IMR-90 (cell line): ENCODE measurements at regions of chr14 and their contacts with region 1.

Region 1: DNA sequence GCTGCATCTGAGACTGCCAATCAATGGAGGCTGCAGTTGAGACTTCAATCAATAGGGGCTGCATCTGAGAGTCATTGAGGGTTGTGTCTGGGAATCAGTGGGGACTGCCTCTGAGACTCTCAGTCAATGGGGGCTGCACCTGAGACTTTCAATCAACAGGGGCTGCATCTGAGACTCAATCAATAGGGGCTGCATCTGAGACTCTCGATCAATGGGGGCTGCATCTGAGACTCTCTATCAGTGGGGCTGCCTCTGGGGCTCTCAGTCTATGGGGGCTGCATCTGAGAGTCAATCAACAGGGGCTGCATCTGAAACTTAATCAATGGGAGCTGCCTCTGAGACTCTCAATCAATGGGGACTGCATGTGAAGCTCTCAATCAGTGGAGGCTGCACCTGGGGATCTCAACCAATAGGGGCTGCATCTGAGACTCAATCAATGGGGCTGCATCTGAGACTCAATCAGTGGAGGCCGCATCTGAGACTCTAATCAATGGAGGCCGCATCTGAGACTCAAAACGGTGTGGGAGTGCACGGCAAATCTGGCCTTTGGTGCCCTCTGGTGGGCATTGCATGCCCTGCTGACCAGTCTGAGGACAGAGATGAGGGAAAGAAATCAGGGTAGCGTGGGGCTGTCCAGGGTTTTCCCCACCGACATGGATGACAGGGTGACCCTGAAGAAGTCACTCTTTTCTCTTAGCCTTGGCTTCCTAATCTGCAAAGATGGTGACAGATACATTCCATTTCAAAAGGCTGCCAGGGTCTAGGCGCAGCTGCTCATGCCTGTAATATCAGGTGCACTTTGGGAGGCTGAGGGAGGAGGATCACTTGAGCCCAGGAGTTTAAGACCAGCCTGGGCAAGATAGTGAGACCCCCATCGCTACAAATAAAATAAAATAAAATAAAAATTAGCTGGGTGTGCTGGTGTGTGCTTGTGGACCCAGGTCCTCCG is 41.3 kb upstream of the EIF5 start:
- DNase-seq: peak; percentile 53
- ATAC-seq: peak; percentile 93
- H3K4me3 ChIP-seq: no peak overlapping the region
- H3K27ac ChIP-seq: no peak overlapping the region
- H3K4me1 ChIP-seq: no peaks in the 10 kb centered on the region
- H3K27me3 ChIP-seq: peaks cover 40% of the 10 kb centered on the region
- CTCF ChIP-seq: peak; percentile 97
- POLR2A ChIP-seq: no peak
- RAD21 ChIP-seq: peak; percentile 97

Region 2: GRCh38 chr14:103078093-103078749 is 214.5 kb before region 1 on chr14:
- CTCF ChIA-PET with region 1: no interaction called
- POLR2A ChIA-PET with region 1: interaction called, 4 read pairs
- dilution Hi-C with region 1: no loop called
- in situ Hi-C with region 1: loop called (anchors 5 kb)
- intact Hi-C with region 1: loop called (anchors 1 kb)
- DNase-seq: peak; percentile 76
- ATAC-seq: peak; percentile 38; the same call in 1 of the 2 replicates
- H3K4me3 ChIP-seq: no peak overlapping the region
- H3K27ac ChIP-seq: no peak overlapping the region
- H3K4me1 ChIP-seq: peaks cover 2% of the 10 kb centered on the region; the same call in 1 of the 2 replicates
- H3K27me3 ChIP-seq: peaks cover 20% of the 10 kb centered on the region
- CTCF ChIP-seq: peak; percentile 75
- POLR2A ChIP-seq: no peak
- RAD21 ChIP-seq: peak; percentile 64

Region 3: DNA sequence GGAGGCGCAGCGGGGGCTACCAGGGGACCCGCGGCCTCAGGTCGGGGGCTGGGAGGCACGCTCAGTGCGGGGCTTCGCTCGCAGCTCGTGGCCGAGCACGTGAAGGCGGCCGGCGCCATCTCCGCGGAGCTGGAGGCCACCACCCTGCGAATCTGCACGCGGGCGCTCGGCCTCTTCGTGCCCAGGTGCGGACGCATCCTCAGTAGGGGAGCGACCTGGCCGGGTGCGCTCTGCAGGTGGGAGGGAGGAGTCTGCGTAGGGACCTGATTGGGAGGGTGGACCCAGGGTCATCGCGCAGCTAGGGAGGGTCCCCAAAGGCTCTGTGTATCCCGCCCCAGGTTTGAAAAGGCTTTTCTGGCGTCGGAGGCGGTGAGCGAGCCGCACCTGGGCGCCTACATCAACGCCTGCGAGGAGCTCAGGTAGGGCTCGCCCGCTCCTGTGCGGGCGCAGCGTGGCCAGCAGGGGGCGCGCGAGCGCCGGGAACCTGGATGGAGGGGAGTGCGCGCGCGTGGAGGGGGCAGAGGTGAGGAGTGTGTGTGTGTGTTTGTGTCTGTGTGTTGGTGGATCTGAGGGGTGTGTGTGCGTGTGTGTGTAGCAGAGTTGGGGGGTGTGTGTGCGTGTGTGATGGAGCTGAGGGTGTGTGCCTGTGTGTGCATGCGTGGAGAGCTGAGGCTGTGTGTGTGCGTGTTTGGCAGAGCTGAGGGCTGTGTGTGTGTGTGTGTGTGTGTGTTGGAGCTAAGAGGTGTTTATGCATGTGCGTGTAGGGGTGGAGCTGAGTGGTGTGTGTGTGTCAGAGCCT is 187.8 kb before region 1 on chr14:
- CTCF ChIA-PET with region 1: interaction called, 23 read pairs
- POLR2A ChIA-PET with region 1: no interaction called
- dilution Hi-C with region 1: no loop called
- in situ Hi-C with region 1: no loop called
- intact Hi-C with region 1: loop called (anchors 1 kb)
- DNase-seq: peak; percentile 50
- ATAC-seq: peak; percentile 58
- H3K4me3 ChIP-seq: no peak overlapping the region
- H3K27ac ChIP-seq: no peak overlapping the region
- H3K4me1 ChIP-seq: peaks cover 15% of the 10 kb centered on the region
- H3K27me3 ChIP-seq: peaks cover 43% of the 10 kb centered on the region
- CTCF ChIP-seq: peak; percentile 88
- POLR2A ChIP-seq: no peak
- RAD21 ChIP-seq: peak; percentile 92

Region 4: GRCh38 chr14:103243764-103244737 is 48.6 kb before region 1 on chr14:
- CTCF ChIA-PET with region 1: no interaction called
- POLR2A ChIA-PET with region 1: no interaction called
- dilution Hi-C with region 1: no loop called
- in situ Hi-C with region 1: no loop called
- intact Hi-C with region 1: no loop called
- DNase-seq: no peak
- ATAC-seq: no peak
- H3K4me3 ChIP-seq: no peak overlapping the region
- H3K27ac ChIP-seq: no peak overlapping the region
- H3K4me1 ChIP-seq: peaks cover 6% of the 10 kb centered on the region
- H3K27me3 ChIP-seq: peaks cover 8% of the 10 kb centered on the region
- CTCF ChIP-seq: no peak
- POLR2A ChIP-seq: no peak
- RAD21 ChIP-seq: no peak